G401 (cell line): ENCODE measurements at regions of chr21 and their contacts with region 1.

Region 1: DNA sequence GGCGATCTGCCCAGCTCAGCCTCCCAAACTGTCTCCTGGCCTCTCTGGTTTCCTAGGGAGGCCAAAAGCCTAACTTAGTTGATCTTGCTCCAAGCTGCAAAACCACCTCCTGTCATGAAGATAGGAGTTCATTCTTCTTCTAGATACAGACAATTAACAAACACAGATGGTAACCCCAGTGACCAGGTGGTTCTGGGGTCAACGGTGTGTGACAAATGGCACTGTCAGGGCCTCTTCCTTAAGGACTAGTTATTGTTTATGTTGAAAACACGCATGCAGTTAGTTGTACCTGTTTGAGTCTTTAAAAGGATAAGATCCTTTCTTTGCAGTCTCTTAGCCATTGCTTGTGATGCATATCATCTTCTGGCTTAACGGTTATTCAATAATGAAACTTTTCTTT is 4.6 kb upstream of the UMODL1 start:
- DNase-seq: no peak

Region 2: GRCh38 chr21:42019101-42019605 is 47.4 kb before region 1 on chr21:
- in situ Hi-C with region 1: loop called (anchors 5 kb)
- DNase-seq: no peak